ENCODE measurements at regions of chr6 and their contacts with region 1.

Region 1: DNA sequence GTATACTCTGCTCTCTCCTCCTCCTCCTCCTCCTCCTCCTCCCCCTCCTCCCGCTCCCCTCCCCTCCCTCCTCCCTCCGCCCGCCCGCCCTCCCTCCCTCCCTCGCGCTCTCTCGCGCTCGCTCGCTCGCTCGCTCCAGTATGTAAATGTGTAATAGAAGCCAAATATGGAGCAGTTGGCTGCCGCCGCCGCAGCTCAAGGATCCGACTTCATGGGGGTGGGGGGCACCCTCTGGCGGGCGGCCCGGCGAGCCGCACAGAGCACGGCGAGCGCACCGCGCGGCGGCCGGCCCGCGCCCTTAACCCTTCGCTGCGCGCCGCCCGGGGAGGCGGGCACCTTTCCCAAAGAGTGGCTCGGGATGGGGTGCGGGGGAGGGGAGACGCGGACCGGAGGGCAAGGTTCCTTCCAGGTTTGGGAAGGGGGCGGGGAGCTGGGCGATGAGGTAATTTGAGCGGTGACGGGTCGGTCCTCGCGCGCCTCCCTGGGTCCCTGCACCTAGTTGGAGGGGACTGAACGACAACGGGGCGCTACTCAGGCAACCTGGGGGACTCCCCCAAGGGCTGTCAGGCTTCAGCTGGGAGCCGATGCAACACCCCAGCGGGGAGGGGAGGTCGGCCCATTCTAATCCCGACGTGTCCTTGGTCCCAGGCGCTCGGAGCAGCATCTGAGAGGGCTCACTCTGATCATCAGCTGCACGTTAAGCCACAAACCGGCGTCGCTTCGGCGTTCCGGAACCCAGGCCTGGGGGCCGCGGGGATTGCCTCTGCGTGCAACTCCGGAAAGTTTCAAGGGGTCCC is 409 bp upstream of the ATXN1 start:
- DNase-seq: peak; percentile 90 to 95 (median 93)
- H3K4me3 ChIP-seq: peak overlapping the region; percentile 63 to 96 (median 91)
- H3K27ac ChIP-seq: peak overlapping the region; percentile 46 to 79
- H3K4me1 ChIP-seq: peaks cover 0 to 31% (median 23%) of the 10 kb centered on the region in 4 experiments
- H3K27me3 ChIP-seq: no peaks in the 10 kb centered on the region

Region 2: GRCh38 chr6:16514249-16514648 is 247.4 kb before region 1 on chr6:
- CTCF ChIA-PET with region 1: interaction called, 55 read pairs
- POLR2A ChIA-PET with region 1: interaction called, 18 read pairs
- DNase-seq: peak; percentile 77 to 86 (median 84)
- H3K4me3 ChIP-seq: peak overlapping the region in 1 of 7 experiments; percentile 8
- H3K27ac ChIP-seq: no peak overlapping the region
- H3K4me1 ChIP-seq: peaks cover 17 to 48% (median 38%) of the 10 kb centered on the region in 4 experiments
- H3K27me3 ChIP-seq: no peaks in the 10 kb centered on the region

Region 3: GRCh38 chr6:16676978-16677377 is 84.7 kb before region 1 on chr6:
- CTCF ChIA-PET with region 1: no interaction called
- POLR2A ChIA-PET with region 1: no interaction called
- DNase-seq: no peak
- H3K4me3 ChIP-seq: no peak overlapping the region
- H3K27ac ChIP-seq: no peak overlapping the region
- H3K4me1 ChIP-seq: peaks cover 0 to 8% (median 2%) of the 10 kb centered on the region in 4 experiments
- H3K27me3 ChIP-seq: no peaks in the 10 kb centered on the region

Region 4: DNA sequence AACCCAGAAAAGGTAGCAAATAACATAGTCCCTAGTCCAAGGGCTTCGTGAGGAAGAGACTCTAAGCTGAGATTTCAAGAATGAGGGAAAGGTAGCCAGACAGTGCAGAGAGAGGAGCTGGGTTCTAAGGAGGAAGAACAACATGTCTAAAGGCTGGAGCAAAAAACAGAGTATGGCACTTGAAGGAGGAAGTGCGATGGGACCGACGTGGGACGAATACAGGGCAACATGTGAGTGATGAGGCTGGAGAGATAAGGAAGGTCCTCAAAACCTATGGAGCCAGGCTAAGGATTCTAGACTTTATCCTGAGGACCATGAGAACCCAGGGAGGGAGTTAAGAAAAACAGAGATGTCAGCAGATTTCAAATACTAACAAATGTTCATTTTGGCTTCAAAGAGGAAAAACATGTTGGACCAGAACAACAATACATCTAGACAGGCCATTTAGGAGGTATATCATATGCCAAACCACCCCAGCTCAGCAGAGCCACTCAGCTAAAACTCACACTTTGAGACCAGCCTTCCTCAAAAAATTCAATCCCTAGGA is 17.9 kb before region 1 on chr6:
- CTCF ChIA-PET with region 1: interaction called, 12 read pairs
- POLR2A ChIA-PET with region 1: interaction called, 3 read pairs
- DNase-seq: no peak
- H3K4me3 ChIP-seq: no peak overlapping the region
- H3K27ac ChIP-seq: no peak overlapping the region
- H3K4me1 ChIP-seq: peaks cover 0 to 19% (median 8%) of the 10 kb centered on the region in 4 experiments
- H3K27me3 ChIP-seq: no peaks in the 10 kb centered on the region

Region 5: GRCh38 chr6:17086469-17086868 is 324.8 kb after region 1 on chr6:
- CTCF ChIA-PET with region 1: interaction called, 13 read pairs
- POLR2A ChIA-PET with region 1: no interaction called
- DNase-seq: peak; percentile 41 to 58 (median 48)
- H3K4me3 ChIP-seq: no peak overlapping the region
- H3K27ac ChIP-seq: no peak overlapping the region
- H3K4me1 ChIP-seq: no peaks in the 10 kb centered on the region
- H3K27me3 ChIP-seq: peaks cover 0 to 4% (median 2%) of the 10 kb centered on the region in 5 experiments